ENCODE measurements at regions of chr19 and their contacts with region 1.

Region 1: DNA sequence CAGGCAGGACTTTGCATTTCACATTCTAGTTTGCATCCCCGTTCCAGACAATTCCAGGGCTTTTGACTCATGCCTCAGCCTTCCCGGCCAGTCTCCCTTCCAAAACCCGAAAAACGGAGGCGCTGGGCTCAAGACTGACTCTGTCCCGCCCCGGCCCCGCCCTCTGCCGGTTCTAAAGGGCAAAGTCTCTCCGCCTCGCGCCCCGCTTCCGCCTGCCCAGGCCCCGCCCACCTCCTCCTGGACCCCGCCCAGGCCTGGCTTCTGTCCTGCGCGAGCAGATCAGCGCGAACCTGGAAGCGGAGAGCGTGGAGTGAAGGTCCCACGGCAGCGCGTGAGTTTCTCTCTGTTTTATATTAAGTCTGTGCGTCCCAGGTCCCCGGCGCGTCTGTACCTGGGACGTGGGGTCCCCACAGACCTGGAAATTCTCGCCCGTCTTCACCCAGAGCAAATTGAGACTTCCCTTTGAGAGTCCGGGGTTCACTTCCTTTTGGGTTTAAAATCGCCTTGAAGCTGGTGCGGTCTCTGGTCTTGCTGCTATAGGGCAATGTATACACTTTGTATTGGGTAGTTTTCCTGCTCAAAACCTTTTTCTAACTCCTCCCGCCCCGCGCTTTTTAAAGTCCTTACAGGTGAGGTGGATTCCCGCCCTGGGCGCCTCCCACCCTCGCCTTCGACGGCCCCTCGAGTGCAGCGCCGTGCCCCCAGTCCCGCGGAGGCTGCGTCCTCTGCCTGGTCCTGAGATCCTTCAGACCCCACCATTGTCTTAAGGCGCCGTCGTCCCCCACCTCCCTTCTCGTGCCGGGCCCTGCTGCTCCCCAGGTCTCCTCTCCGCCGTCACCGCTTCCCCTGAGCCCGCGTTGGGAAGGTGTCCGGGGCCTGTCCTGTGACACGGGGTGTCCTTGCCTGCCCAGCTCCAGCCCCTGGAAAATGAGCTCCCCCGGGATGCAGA is 31.2 kb downstream of the ZNF701 start:
- DNase-seq: peak; percentile 96
- H3K4me3 Mint-ChIP-seq: peak overlapping the region; percentile 83
- H3K27ac Mint-ChIP-seq: peak overlapping the region; percentile 58
- H3K4me1 Mint-ChIP-seq: peaks cover 14% of the 10 kb centered on the region
- H3K27me3 Mint-ChIP-seq: no peaks in the 10 kb centered on the region

Region 2: GRCh38 chr19:52535771-52536447 is 65.4 kb before region 1 on chr19:
- CTCF ChIA-PET with region 1: no interaction called
- POLR2A ChIA-PET with region 1: no interaction called
- intact Hi-C with region 1: loop called (anchors 2 kb)
- DNase-seq: peak; percentile 96
- H3K4me3 Mint-ChIP-seq: peak overlapping the region; percentile 80
- H3K27ac Mint-ChIP-seq: peak overlapping the region; percentile 91
- H3K4me1 Mint-ChIP-seq: peaks cover 22% of the 10 kb centered on the region
- H3K27me3 Mint-ChIP-seq: no peaks in the 10 kb centered on the region